ENCODE measurements at regions of chr1 and their contacts with region 1.

Region 1: GRCh38 chr1:2561898-2562545 is 5.9 kb downstream of the TNFRSF14 start:
- DNase-seq: peak in 2 of 14 experiments; percentile 35 to 46
- ATAC-seq: peak; percentile 47
- H3K4me3 ChIP-seq: no peak overlapping the region
- H3K4me3 Mint-ChIP-seq: no peak overlapping the region
- H3K27ac ChIP-seq: peak overlapping the region in 1 of 2 donors; percentile 34
- H3K27ac Mint-ChIP-seq: peak overlapping the region; percentile 76
- H3K4me1 ChIP-seq: peaks cover 43% of the 10 kb centered on the region
- H3K4me1 Mint-ChIP-seq: peaks cover 11% of the 10 kb centered on the region
- H3K27me3 ChIP-seq: no peaks in the 10 kb centered on the region
- H3K27me3 Mint-ChIP-seq: no peaks in the 10 kb centered on the region
- CTCF ChIP-seq: no peak

Region 2: DNA sequence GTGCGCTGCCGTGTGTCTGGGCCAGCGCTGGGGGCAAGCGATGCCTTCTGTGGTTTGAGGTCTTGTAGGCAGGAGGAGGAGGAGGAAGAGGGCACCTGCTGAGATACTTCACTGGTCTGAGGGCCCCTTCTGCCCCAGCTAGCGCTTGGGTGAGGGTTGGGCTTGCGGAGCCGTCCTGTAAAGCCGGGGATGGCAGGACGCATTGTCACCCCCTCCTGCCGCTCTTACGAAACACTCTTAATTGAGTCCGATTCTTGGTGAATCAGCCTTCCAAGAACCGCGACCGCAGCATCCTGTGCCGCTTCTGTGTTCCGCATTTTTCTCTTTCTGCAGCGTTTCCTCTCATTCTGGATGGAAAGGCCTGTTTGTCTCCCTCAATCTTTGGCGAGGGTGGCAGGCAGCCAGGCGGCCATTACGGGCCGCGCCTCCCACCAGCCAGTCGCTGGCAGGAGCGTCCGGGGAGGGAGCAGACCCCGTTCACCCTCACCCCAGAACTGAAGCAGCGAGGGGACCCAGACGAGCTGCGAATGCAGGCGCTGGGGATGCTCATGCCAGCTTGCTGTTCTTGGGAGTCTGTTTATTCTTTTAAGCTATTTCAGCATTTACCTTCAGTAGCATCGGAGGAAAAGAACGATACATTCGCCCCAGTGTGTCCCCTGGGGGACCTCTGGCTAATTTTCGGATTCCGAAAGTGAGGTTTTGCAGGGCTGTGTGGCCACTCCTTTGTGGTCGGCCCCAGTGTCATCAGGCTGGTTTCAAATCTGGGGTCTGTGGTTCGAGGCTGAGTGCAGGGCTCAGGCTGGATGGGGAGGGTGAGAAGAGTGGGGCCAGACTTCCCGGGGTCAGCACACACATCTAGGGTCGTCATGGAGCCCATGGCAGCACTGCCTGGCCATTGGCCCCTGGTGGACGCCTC is 271.2 kb before region 1 on chr1:
- CTCF ChIA-PET with region 1: no interaction called
- POLR2A ChIA-PET with region 1: no interaction called
- intact Hi-C with region 1: no loop called
- DNase-seq: peak; percentile 52 to 91 (median 76)
- ATAC-seq: peak; percentile 64
- H3K4me3 ChIP-seq: peak overlapping the region; percentile 51
- H3K4me3 Mint-ChIP-seq: peak overlapping the region; percentile 93
- H3K27ac ChIP-seq: peak overlapping the region; percentile 60 to 66
- H3K27ac Mint-ChIP-seq: peak overlapping the region; percentile 99
- H3K4me1 ChIP-seq: peaks cover 97% of the 10 kb centered on the region
- H3K4me1 Mint-ChIP-seq: peaks cover 87% of the 10 kb centered on the region
- H3K27me3 ChIP-seq: no peaks in the 10 kb centered on the region
- H3K27me3 Mint-ChIP-seq: no peaks in the 10 kb centered on the region
- CTCF ChIP-seq: no peak

Region 3: GRCh38 chr1:2575801-2576663 is 14.0 kb after region 1 on chr1:
- CTCF ChIA-PET with region 1: interaction called, 15 read pairs
- POLR2A ChIA-PET with region 1: interaction called, 10 read pairs
- intact Hi-C with region 1: no loop called
- DNase-seq: peak in 1 of 14 experiments; percentile 40
- ATAC-seq: no peak
- H3K4me3 ChIP-seq: no peak overlapping the region
- H3K4me3 Mint-ChIP-seq: no peak overlapping the region
- H3K27ac ChIP-seq: no peak overlapping the region
- H3K27ac Mint-ChIP-seq: peak overlapping the region; percentile 49
- H3K4me1 ChIP-seq: peaks cover 55% of the 10 kb centered on the region
- H3K4me1 Mint-ChIP-seq: peaks cover 44% of the 10 kb centered on the region
- H3K27me3 ChIP-seq: no peaks in the 10 kb centered on the region
- H3K27me3 Mint-ChIP-seq: no peaks in the 10 kb centered on the region
- CTCF ChIP-seq: no peak